Endothelial cell of umbilical vein (primary cell): ENCODE measurements at regions of chr22 and their contacts with region 1.

Region 1: DNA sequence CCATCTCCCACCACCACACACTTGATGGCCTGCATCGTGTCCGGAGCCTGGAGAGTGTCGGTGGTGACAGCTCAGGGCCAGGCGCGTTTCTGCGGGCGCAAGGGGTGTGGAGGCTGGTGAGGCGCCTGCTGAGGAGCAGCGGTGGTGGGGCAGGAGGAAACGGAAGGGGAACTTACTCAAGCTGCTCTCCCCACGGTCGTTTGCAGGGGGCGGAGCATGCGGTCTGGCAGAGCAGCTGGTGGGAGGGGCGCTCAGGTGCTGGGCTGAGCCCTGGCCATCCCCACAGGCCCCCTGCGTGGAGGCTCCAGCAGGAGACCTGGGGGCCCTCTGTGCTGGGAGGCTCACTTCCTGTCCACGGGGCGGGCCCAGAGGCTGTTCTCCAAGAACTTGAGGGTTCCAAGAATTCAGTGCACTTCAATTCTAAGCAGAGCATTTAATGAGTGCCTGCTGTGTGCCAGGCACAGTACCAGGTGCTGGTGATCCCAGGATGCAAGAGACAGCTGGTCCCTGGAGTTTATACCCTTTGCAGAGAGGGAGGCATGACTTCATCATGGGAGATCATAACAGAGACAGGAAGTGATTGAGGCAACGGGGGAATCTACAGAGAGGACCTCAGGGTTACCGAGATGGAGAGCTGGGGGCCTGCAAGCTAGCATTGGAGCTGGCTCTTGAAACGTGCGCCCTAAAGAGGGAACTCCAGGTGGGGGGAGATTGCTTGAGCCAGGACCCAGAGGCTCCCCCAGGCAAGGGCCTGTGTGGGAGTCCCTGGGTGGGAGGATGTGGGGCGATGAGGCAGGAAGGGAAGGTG is at the start of gene RAC2:
- DNase-seq: peak; percentile 69
- H3K4me3 ChIP-seq: peak within 1 kb of the TSS; percentile 39 to 59 (median 50)
- H3K27ac ChIP-seq: peak within 1 kb of the TSS; percentile 28
- H3K4me1 ChIP-seq: peaks cover 34% of the 10 kb centered on the region
- H3K27me3 ChIP-seq: no peaks in the 10 kb centered on the region
- CTCF ChIP-seq: no peak
- POLR2A ChIP-seq: peak; percentile 84
- total RNA-seq, gene RAC2: 111 and 122 TPM in 2 replicates

Region 2: GRCh38 chr22:37229805-37230672 is 14.3 kb before region 1 on chr22:
- CTCF ChIA-PET with region 1: interaction called, 10 read pairs
- POLR2A ChIA-PET with region 1: no interaction called
- dilution Hi-C with region 1: no loop called
- intact Hi-C with region 1: no loop called
- DNase-seq: no peak
- H3K4me3 ChIP-seq: no peak overlapping the region
- H3K27ac ChIP-seq: peak overlapping the region; percentile 57
- H3K4me1 ChIP-seq: peaks cover 27% of the 10 kb centered on the region
- H3K27me3 ChIP-seq: no peaks in the 10 kb centered on the region
- CTCF ChIP-seq: no peak
- POLR2A ChIP-seq: no peak

Region 3: GRCh38 chr22:37254209-37254866 is 10.0 kb after region 1 on chr22:
- CTCF ChIA-PET with region 1: interaction called, 83 read pairs
- POLR2A ChIA-PET with region 1: no interaction called
- dilution Hi-C with region 1: no loop called
- intact Hi-C with region 1: loop called (anchors 1 kb)
- DNase-seq: peak; percentile 76
- H3K4me3 ChIP-seq: peak overlapping the region in 2 of 3 experiments; percentile 10 to 43
- H3K27ac ChIP-seq: peak overlapping the region; percentile 99
- H3K4me1 ChIP-seq: peaks cover 31% of the 10 kb centered on the region
- H3K27me3 ChIP-seq: no peaks in the 10 kb centered on the region
- CTCF ChIP-seq: no peak
- POLR2A ChIP-seq: no peak

Region 4: DNA sequence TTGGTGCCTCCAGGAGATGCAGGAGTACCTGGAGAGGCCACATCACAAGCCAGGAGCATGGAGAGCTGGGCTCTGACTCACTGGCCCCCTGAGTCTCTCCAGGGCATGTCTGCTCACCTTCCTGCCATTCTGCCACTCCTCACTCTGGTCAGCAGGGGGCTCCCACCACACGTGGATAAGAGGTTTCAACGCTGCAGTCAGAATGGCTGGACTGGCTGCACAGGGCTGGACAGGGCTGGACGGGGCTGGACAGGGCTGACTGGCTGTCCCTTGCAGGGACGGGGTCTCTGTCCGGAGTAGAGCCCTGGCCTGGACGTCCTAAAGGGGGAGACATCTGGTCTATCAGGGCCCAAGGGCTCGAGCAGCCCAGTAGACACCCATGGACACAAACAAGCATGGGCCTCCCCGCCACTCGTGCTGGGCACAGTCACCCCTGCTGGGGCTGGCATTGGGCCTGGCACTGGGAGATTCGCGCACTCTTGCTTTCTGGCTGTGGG is 72.6 kb after region 1 on chr22:
- CTCF ChIA-PET with region 1: no interaction called
- POLR2A ChIA-PET with region 1: no interaction called
- dilution Hi-C with region 1: no loop called
- intact Hi-C with region 1: no loop called
- DNase-seq: peak; percentile 82
- H3K4me3 ChIP-seq: no peak overlapping the region
- H3K27ac ChIP-seq: no peak overlapping the region
- H3K4me1 ChIP-seq: peaks cover 6% of the 10 kb centered on the region
- H3K27me3 ChIP-seq: no peaks in the 10 kb centered on the region
- CTCF ChIP-seq: peak; percentile 93
- POLR2A ChIP-seq: no peak